ENCODE measurements at regions of chr4 and their contacts with region 1.

Region 1: GRCh38 chr4:3074078-3074795 is at the starts of genes HTT and HTT-AS:
- DNase-seq: peak; percentile 93 to 98 (median 97)
- ATAC-seq: peak; percentile 83
- H3K4me3 ChIP-seq: peak within 1 kb of the TSS; percentile 88 to 100
- H3K4me3 Mint-ChIP-seq: peak within 1 kb of the TSS; percentile 93
- H3K27ac ChIP-seq: peak within 1 kb of the TSS; percentile 69 to 89
- H3K27ac Mint-ChIP-seq: peak within 1 kb of the TSS; percentile 95
- H3K4me1 ChIP-seq: peaks cover 18% of the 10 kb centered on the region
- H3K4me1 Mint-ChIP-seq: peaks cover 25% of the 10 kb centered on the region
- H3K27me3 ChIP-seq: no peaks in the 10 kb centered on the region
- H3K27me3 Mint-ChIP-seq: no peaks in the 10 kb centered on the region
- CTCF ChIP-seq: no peak
- total RNA-seq, gene HTT: 60.3 to 69.4 TPM
- total RNA-seq, gene HTT-AS: not detected

Region 2: DNA sequence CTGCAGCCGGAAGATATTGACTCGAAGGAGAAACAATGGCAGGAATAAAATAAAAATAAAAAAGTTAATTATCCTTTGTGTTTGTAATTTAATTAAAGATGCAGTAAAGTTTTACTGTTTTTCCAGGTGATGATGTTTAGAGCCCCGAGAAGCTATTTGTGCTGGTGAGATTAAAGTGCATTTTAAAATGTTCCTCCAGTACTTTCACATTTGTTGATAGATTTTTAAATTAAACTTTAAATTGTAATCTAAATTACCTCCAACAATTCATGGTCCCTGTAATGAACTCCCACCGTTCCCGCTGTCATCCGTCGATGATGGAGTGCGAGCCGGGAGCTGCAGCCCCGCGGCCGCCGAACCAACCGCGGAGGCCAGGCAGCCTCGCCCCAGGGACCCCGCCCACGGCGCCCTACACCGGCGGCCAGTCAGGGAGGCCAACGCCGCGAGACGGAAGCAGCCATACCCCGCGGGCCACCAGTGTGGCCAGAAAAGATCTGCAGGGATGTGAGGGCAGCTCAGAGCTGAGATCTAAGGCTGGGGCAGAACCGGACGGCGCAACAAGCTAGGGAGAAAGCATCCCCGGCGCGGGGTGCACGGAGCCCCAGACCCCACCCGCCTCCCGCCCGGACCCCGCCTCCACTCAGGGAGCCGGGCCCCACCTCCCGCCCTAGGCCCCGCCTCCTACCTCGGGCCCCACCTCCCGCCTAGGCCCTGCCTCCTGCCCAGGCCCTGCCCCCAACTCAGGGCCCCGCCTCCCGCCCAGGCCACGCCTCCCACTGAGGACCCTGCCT is 1494.1 kb before region 1 on chr4:
- CTCF ChIA-PET with region 1: no interaction called
- POLR2A ChIA-PET with region 1: no interaction called
- intact Hi-C with region 1: loop called (anchors 5 kb)
- DNase-seq: peak; percentile 83 to 96 (median 93)
- ATAC-seq: peak; percentile 82
- H3K4me3 ChIP-seq: peak overlapping the region; percentile 70 to 78
- H3K4me3 Mint-ChIP-seq: peak overlapping the region; percentile 79
- H3K27ac ChIP-seq: peak overlapping the region; percentile 66 to 73
- H3K27ac Mint-ChIP-seq: peak overlapping the region; percentile 79
- H3K4me1 ChIP-seq: no peaks in the 10 kb centered on the region
- H3K4me1 Mint-ChIP-seq: peaks cover 11% of the 10 kb centered on the region
- H3K27me3 ChIP-seq: no peaks in the 10 kb centered on the region
- H3K27me3 Mint-ChIP-seq: no peaks in the 10 kb centered on the region
- CTCF ChIP-seq: no peak

Region 3: DNA sequence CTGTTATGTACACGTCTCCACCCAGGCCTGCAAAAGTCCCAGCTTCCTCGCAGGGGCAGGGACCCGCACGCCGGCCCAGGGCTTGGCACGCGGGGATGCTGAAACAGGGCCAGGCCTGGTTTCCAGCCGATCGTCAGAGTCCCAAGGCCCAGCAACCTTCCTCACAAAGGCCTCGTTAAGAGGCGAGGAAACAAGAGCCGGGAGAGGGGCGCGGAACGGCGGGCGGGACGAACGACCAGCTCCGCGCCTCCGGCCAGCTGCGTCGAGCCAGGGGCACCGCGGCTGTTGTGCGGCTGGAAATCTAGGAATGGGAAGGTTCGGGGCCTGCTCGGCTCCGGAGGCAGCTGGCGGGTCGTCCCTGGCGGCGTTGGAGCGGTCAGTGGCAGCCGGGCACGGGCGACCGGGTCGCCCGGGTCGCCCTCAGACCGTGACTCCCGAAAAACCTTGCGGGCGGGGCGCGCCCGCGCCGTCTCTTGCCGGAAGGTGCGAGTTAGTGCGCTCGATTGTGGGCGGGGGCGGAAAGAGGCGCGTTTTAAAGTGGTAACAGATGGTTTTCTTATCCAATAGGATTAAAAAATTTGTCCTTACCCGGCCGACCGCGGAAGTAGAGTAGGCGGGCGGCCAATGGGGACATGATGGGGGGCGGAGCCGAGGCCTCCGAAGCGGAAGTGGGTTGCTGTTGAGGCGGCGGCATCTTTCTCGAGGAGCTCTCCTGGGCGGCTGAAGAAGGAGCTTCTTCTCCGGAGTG is 605.6 kb before region 1 on chr4 and contains the start of gene RNF4:
- CTCF ChIA-PET with region 1: no interaction called
- POLR2A ChIA-PET with region 1: no interaction called
- intact Hi-C with region 1: loop called in 1 of 2 experiments (anchors 2 kb)
- DNase-seq: peak; percentile 90 to 98 (median 94)
- ATAC-seq: peak; percentile 82
- H3K4me3 ChIP-seq: peak within 1 kb of the TSS; percentile 54 to 91
- H3K4me3 Mint-ChIP-seq: peak within 1 kb of the TSS; percentile 96
- H3K27ac ChIP-seq: peak within 1 kb of the TSS; percentile 95 to 97
- H3K27ac Mint-ChIP-seq: peak within 1 kb of the TSS; percentile 98
- H3K4me1 ChIP-seq: peaks cover 42% of the 10 kb centered on the region
- H3K4me1 Mint-ChIP-seq: peaks cover 45% of the 10 kb centered on the region
- H3K27me3 ChIP-seq: no peaks in the 10 kb centered on the region
- H3K27me3 Mint-ChIP-seq: no peaks in the 10 kb centered on the region
- CTCF ChIP-seq: no peak
- total RNA-seq, gene RNF4: 130 to 134 TPM

Region 4: GRCh38 chr4:2934813-2935761 is 139.2 kb before region 1 on chr4:
- CTCF ChIA-PET with region 1: no interaction called
- POLR2A ChIA-PET with region 1: no interaction called
- intact Hi-C with region 1: loop called in 1 of 2 experiments (anchors 10 kb)
- DNase-seq: peak; percentile 91 to 99 (median 97)
- ATAC-seq: peak; percentile 55
- H3K4me3 ChIP-seq: peak overlapping the region; percentile 71 to 95
- H3K4me3 Mint-ChIP-seq: peak overlapping the region; percentile 85
- H3K27ac ChIP-seq: peak overlapping the region; percentile 94 to 96
- H3K27ac Mint-ChIP-seq: peak overlapping the region; percentile 90
- H3K4me1 ChIP-seq: peaks cover 55% of the 10 kb centered on the region
- H3K4me1 Mint-ChIP-seq: peaks cover 46% of the 10 kb centered on the region
- H3K27me3 ChIP-seq: no peaks in the 10 kb centered on the region
- H3K27me3 Mint-ChIP-seq: no peaks in the 10 kb centered on the region
- CTCF ChIP-seq: no peak

Region 5: GRCh38 chr4:3091464-3091863 is 17.2 kb after region 1 on chr4:
- CTCF ChIA-PET with region 1: no interaction called
- POLR2A ChIA-PET with region 1: no interaction called
- intact Hi-C with region 1: no loop called
- DNase-seq: no peak
- ATAC-seq: no peak
- H3K4me3 ChIP-seq: no peak overlapping the region
- H3K4me3 Mint-ChIP-seq: no peak overlapping the region
- H3K27ac ChIP-seq: no peak overlapping the region
- H3K27ac Mint-ChIP-seq: no peak overlapping the region
- H3K4me1 ChIP-seq: no peaks in the 10 kb centered on the region
- H3K4me1 Mint-ChIP-seq: peaks cover 5% of the 10 kb centered on the region
- H3K27me3 ChIP-seq: no peaks in the 10 kb centered on the region
- H3K27me3 Mint-ChIP-seq: no peaks in the 10 kb centered on the region
- CTCF ChIP-seq: no peak

Region 6: GRCh38 chr4:3292571-3293400 is 218.5 kb after region 1 on chr4 and contains the start of gene RGS12:
- CTCF ChIA-PET with region 1: no interaction called
- POLR2A ChIA-PET with region 1: no interaction called
- intact Hi-C with region 1: loop called in 1 of 2 experiments (anchors 5 kb)
- DNase-seq: peak; percentile 58 to 89 (median 78)
- ATAC-seq: peak; percentile 82
- H3K4me3 ChIP-seq: peak within 1 kb of the TSS; percentile 67 to 79
- H3K4me3 Mint-ChIP-seq: peak within 1 kb of the TSS; percentile 89
- H3K27ac ChIP-seq: no peak within 1 kb of the TSS
- H3K27ac Mint-ChIP-seq: peak within 1 kb of the TSS; percentile 82
- H3K4me1 ChIP-seq: peaks cover 14% of the 10 kb centered on the region
- H3K4me1 Mint-ChIP-seq: peaks cover 18% of the 10 kb centered on the region
- H3K27me3 ChIP-seq: peaks cover 0 to 4% of the 10 kb centered on the region in 2 experiments
- H3K27me3 Mint-ChIP-seq: peaks cover 20% of the 10 kb centered on the region
- CTCF ChIP-seq: no peak
- total RNA-seq, gene RGS12: 4.4 to 7.6 TPM

Region 7: GRCh38 chr4:3945511-3946290 is 871.5 kb after region 1 on chr4:
- CTCF ChIA-PET with region 1: no interaction called
- POLR2A ChIA-PET with region 1: no interaction called
- intact Hi-C with region 1: loop called in 1 of 2 experiments (anchors 10 kb)
- DNase-seq: no peak
- ATAC-seq: no peak
- H3K4me3 ChIP-seq: no peak overlapping the region
- H3K4me3 Mint-ChIP-seq: no peak overlapping the region
- H3K27ac ChIP-seq: no peak overlapping the region
- H3K27ac Mint-ChIP-seq: no peak overlapping the region
- H3K4me1 ChIP-seq: no peaks in the 10 kb centered on the region
- H3K4me1 Mint-ChIP-seq: peaks cover 10% of the 10 kb centered on the region
- H3K27me3 ChIP-seq: no peaks in the 10 kb centered on the region
- H3K27me3 Mint-ChIP-seq: peaks cover 2% of the 10 kb centered on the region
- CTCF ChIP-seq: no peak

Region 8: GRCh38 chr4:4758681-4759080 is 1684.4 kb after region 1 on chr4:
- CTCF ChIA-PET with region 1: no interaction called
- POLR2A ChIA-PET with region 1: no interaction called
- intact Hi-C with region 1: no loop called
- DNase-seq: no peak
- ATAC-seq: no peak
- H3K4me3 ChIP-seq: no peak overlapping the region
- H3K4me3 Mint-ChIP-seq: no peak overlapping the region
- H3K27ac ChIP-seq: no peak overlapping the region
- H3K27ac Mint-ChIP-seq: no peak overlapping the region
- H3K4me1 ChIP-seq: peaks cover 8% of the 10 kb centered on the region
- H3K4me1 Mint-ChIP-seq: peaks cover 9% of the 10 kb centered on the region
- H3K27me3 ChIP-seq: no peaks in the 10 kb centered on the region
- H3K27me3 Mint-ChIP-seq: peaks cover 5% of the 10 kb centered on the region
- CTCF ChIP-seq: no peak

Measured in CD8-positive, alpha-beta T cell (primary cell).